PC-9 (cell line): ENCODE measurements at regions of chr20 and their contacts with region 1.

Region 1: GRCh38 chr20:50929299-50930138 is 1.7 kb downstream of the ADNP start:
- DNase-seq: peak; percentile 82 to 87
- H3K4me3 ChIP-seq: peak overlapping the region; percentile 69
- H3K27ac ChIP-seq: no peak overlapping the region
- H3K4me1 ChIP-seq: peaks cover 39% of the 10 kb centered on the region
- H3K27me3 ChIP-seq: no peaks in the 10 kb centered on the region
- CTCF ChIP-seq: peak; percentile 95

Region 2: DNA sequence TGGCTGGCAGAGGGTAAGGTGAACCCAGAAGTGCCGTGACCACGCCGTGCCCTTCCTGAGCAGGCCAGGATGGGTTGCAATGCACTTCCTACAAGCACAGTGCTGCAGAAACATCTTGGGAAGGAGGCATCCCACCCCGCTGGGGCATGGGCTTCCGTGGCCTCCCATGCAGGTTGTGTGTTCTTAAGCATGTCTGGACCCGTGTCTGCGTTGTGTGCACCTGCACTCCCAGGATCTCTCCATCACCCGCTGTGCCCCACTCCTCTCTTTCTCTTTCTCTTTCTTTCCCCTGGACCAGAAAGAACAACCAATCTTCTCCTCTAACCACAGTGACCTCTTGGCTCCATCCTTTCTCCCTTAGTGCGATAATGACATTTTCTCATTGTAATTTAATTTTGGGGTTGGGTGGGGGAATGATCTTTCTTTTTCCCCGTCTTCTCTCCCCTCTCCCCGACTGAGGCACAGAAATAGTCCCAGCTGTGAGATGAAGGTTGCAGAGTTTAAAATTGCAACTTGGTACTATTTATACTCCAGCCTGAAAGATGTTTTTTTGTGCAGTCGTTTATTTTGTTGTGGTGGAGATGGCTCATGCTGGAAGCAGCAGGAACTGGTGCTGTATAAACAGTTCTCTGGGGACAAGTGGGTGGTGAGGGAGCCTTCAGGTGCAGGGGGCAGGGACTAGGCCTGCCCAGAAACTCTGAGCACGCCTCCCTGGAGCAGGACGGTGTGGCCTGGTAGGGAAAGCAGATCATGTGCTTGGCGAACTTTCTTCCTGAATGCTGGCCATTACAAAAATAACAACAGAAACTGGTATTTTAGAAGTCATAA is 114.1 kb before region 1 on chr20:
- CTCF ChIA-PET with region 1: interaction called, 5 read pairs
- POLR2A ChIA-PET with region 1: no interaction called
- intact Hi-C with region 1: loop called (anchors 1 kb)
- DNase-seq: peak; percentile 46 to 53
- H3K4me3 ChIP-seq: no peak overlapping the region
- H3K27ac ChIP-seq: no peak overlapping the region; the same call in 1 of the 2 replicates
- H3K4me1 ChIP-seq: 0 out of 2 replicates have a peak, but pooled peaks cover 7% of the 10 kb centered on the region
- H3K27me3 ChIP-seq: no peaks in the 10 kb centered on the region
- CTCF ChIP-seq: no peak

Region 3: GRCh38 chr20:50895111-50895830 is 34.2 kb before region 1 on chr20:
- CTCF ChIA-PET with region 1: no interaction called
- POLR2A ChIA-PET with region 1: interaction called, 12 read pairs
- intact Hi-C with region 1: no loop called
- DNase-seq: no peak
- H3K4me3 ChIP-seq: no peak overlapping the region
- H3K27ac ChIP-seq: no peak overlapping the region
- H3K4me1 ChIP-seq: no peaks in the 10 kb centered on the region
- H3K27me3 ChIP-seq: no peaks in the 10 kb centered on the region
- CTCF ChIP-seq: no peak

Region 4: DNA sequence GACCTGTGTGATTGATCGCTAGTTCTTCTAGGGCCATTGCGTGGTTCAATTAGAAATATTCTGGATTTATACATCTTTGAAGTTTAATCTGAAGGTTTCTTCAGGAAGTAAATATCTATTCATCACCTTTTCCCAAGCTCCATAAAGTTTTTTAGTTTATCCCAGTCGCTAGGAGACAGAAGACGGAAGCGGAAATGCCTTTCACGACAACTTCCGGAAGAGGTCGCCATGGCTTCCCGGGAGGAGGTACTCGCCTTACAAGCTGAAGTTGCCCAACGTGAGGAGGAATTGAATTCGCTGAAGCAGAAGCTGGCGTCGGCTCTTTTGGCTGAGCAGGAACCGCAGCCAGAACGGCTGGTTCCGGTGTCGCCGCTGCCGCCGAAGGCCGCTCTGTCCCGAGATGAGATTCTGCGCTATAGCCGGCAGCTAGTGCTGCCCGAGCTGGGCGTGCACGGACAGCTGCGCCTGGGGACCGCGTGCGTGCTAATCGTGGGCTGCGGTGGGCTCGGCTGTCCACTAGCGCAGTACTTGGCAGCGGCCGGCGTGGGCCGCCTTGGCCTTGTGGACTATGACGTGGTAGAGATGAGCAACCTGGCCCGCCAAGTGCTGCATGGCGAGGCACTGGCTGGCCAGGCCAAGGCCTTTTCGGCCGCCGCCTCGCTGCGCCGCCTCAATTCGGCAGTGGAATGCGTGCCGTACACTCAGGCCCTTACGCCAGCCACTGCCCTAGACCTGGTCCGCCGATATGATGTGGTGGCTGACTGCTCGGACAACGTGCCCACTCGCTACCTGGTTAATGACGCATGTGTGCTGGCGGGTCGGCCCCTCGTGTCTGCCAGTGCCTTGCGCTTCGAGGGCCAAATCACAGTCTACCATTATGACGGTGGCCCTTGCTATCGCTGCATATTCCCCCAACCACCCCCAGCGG is 29.4 kb after region 1 on chr20 and contains the start of gene MOCS3:
- CTCF ChIA-PET with region 1: interaction called, 6 read pairs
- POLR2A ChIA-PET with region 1: interaction called, 11 read pairs
- intact Hi-C with region 1: loop called (anchors 2 kb)
- DNase-seq: peak; percentile 82 to 92
- H3K4me3 ChIP-seq: peak within 1 kb of the TSS; percentile 93
- H3K27ac ChIP-seq: peak within 1 kb of the TSS; percentile 83
- H3K4me1 ChIP-seq: peaks cover 38% of the 10 kb centered on the region
- H3K27me3 ChIP-seq: no peaks in the 10 kb centered on the region
- CTCF ChIP-seq: no peak
- total RNA-seq, gene MOCS3: 4.8 and 5.5 TPM in 2 replicates

Region 5: DNA sequence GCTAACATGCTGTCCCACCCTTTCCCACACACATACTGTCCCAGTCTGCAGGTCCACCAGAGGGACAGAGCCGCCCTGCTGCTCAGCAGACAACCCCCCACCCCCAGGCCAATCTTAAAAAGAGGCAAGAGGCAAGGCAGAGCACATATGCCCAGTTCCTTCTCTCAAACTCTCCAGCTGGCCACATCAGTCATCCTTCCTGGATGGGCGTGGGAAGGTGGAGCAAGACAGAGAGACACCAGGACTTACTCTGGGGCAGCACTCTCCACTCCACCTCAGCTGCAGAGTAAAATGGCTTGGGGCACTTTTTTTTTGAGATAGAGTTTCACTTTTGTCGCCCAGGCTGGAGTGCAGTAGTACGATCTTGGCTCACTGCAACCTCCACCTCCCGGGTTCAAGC is 39.9 kb after region 1 on chr20:
- CTCF ChIA-PET with region 1: no interaction called
- POLR2A ChIA-PET with region 1: no interaction called
- intact Hi-C with region 1: no loop called
- DNase-seq: no peak
- H3K4me3 ChIP-seq: no peak overlapping the region
- H3K27ac ChIP-seq: no peak overlapping the region
- H3K4me1 ChIP-seq: no peaks in the 10 kb centered on the region
- H3K27me3 ChIP-seq: peaks cover 9% of the 10 kb centered on the region; the same call in 1 of the 2 replicates
- CTCF ChIP-seq: no peak

Region 6: GRCh38 chr20:51469578-51470498 is 540.3 kb after region 1 on chr20:
- CTCF ChIA-PET with region 1: no interaction called
- POLR2A ChIA-PET with region 1: no interaction called
- intact Hi-C with region 1: no loop called
- DNase-seq: no peak
- H3K4me3 ChIP-seq: no peak overlapping the region
- H3K27ac ChIP-seq: no peak overlapping the region
- H3K4me1 ChIP-seq: no peaks in the 10 kb centered on the region
- H3K27me3 ChIP-seq: no peaks in the 10 kb centered on the region
- CTCF ChIP-seq: no peak